ENCODE measurements at regions of chr11 and their contacts with region 1.

Region 1: DNA sequence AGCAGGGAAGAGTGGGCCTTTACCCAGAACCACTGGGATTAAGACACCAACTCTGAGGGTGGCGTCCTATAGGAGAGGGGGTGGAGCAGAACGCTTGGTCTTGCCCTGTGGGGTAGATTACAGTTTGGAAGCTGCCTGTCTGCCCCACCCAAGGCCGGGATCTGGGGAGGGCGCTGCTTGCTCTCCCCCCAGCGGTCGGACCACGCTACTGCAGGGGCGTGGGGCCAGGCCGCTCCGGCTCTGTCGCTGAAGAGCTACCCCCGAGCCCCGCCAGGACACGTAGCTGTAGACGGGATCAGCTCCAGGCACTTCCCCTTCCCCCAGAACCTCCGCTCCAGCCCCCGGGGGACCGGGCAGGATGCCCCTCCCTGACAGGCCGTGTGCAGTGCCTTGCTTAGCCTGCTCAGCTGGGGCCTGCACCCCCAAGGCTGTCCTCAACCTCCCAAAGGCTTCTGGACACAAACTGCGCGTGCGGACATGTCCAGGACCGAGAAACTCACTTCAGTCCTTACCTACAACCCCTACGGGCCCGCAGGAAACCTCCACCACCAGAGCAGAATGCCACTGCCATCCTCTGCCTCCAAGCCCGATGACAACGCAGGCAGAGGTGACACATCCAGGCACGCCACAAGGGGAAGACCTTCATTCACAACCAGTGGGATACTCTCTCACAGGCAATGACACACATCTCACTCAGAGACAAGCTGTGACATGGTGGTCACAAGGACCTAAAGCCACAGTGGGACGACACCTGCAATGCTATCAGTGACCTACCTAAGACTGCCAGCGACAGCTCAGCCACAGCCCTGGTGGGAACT is 3.6 kb downstream of the AHNAK start:
- DNase-seq: peak; percentile 86 to 93 (median 89)
- ATAC-seq: peak; percentile 32 to 61 (median 46)
- H3K4me3 ChIP-seq: peak overlapping the region; percentile 71 to 100 (median 98)
- H3K27ac ChIP-seq: peak overlapping the region; percentile 94 to 100 (median 99)
- H3K4me1 ChIP-seq: peaks cover 42 to 84% (median 69%) of the 10 kb centered on the region in 12 donors
- H3K27me3 ChIP-seq: no peaks in the 10 kb centered on the region
- CTCF ChIP-seq: peak; percentile 97 to 100 (median 99)
- POLR2A ChIP-seq: no peak

Region 2: DNA sequence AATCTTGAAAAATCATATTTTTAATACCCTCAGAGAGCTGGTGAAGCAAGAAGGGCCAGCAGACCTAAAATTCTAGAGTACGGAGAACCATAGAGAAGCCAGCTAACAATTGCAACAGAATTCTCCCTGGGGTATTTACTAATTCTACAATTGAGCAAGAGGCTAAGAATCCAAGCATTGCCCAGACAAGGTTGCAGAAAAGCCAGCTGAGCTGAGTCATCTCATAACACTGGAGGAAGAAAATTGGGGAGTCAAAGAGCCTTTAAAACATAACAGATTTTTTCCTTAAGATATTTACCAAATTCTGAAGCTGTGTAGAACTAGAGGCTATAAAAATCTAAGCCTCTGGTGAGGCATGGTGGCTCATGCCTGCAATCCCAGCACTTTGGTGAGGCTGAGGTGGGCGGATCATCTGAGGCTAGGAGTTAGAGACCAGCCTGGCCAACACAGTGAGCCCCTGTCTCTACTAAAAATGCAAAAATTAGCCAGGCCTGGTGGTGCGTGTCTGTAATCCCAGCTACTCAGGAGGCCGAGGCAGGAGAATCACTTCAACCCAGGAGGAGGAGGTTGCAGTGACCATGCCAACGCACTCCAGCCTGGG is 1164.1 kb before region 1 on chr11:
- intact Hi-C with region 1: no loop called
- DNase-seq: peak in 2 of 5 donors; percentile 43 to 46
- ATAC-seq: peak; percentile 55 to 95 (median 82)
- H3K4me3 ChIP-seq: no peak overlapping the region
- H3K27ac ChIP-seq: peak overlapping the region in 11 of 12 donors; percentile 10 to 51 (median 41)
- H3K4me1 ChIP-seq: peaks cover 0 to 12% (median 0%) of the 10 kb centered on the region in 12 donors
- H3K27me3 ChIP-seq: no peaks in the 10 kb centered on the region
- CTCF ChIP-seq: no peak
- POLR2A ChIP-seq: no peak

Region 3: DNA sequence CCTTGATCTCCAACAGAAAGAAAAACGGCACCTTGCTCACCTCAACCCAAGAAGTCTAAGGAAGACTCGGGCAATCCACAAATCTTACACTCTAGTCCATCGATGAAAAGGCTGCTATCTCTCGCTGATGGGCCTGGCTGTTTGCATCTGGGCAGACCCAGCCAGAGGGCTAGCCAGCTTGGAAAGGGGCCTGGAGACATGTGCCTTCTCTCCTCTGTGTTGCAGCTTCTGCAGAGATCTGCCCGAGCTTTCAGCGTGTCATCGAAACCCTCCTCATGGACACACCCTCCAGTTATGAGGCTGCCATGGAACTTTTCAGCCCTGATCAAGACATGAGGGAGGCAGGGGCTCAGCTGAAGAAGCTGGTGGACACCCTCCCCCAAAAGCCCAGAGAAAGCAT is 121.0 kb before region 1 on chr11:
- intact Hi-C with region 1: loop called (anchors 1 to 5 kb)
- DNase-seq: no peak
- ATAC-seq: no peak
- H3K4me3 ChIP-seq: no peak overlapping the region
- H3K27ac ChIP-seq: peak overlapping the region in 1 of 12 donors; percentile 16
- H3K4me1 ChIP-seq: peaks cover 0 to 18% (median 7%) of the 10 kb centered on the region in 12 donors
- H3K27me3 ChIP-seq: no peaks in the 10 kb centered on the region
- CTCF ChIP-seq: no peak
- POLR2A ChIP-seq: no peak

Region 4: GRCh38 chr11:62484352-62484751 is 58.6 kb before region 1 on chr11:
- intact Hi-C with region 1: no loop called
- DNase-seq: no peak
- ATAC-seq: no peak
- H3K4me3 ChIP-seq: no peak overlapping the region
- H3K27ac ChIP-seq: no peak overlapping the region
- H3K4me1 ChIP-seq: peaks cover 0 to 17% (median 0%) of the 10 kb centered on the region in 12 donors
- H3K27me3 ChIP-seq: no peaks in the 10 kb centered on the region
- CTCF ChIP-seq: no peak
- POLR2A ChIP-seq: no peak

Region 5: GRCh38 chr11:62497132-62497915 is 45.6 kb before region 1 on chr11:
- intact Hi-C with region 1: loop called in 3 of 10 experiments (anchors 1 to 5 kb)
- DNase-seq: peak in 1 of 5 donors; percentile 18
- ATAC-seq: peak in 2 of 4 donors; percentile 26 to 51
- H3K4me3 ChIP-seq: no peak overlapping the region
- H3K27ac ChIP-seq: peak overlapping the region in 1 of 12 donors; percentile 22
- H3K4me1 ChIP-seq: peaks cover 0 to 46% (median 29%) of the 10 kb centered on the region in 12 donors
- H3K27me3 ChIP-seq: no peaks in the 10 kb centered on the region
- CTCF ChIP-seq: peak in 11 of 12 donors; percentile 21 to 52 (median 37)
- POLR2A ChIP-seq: no peak

Region 6: DNA sequence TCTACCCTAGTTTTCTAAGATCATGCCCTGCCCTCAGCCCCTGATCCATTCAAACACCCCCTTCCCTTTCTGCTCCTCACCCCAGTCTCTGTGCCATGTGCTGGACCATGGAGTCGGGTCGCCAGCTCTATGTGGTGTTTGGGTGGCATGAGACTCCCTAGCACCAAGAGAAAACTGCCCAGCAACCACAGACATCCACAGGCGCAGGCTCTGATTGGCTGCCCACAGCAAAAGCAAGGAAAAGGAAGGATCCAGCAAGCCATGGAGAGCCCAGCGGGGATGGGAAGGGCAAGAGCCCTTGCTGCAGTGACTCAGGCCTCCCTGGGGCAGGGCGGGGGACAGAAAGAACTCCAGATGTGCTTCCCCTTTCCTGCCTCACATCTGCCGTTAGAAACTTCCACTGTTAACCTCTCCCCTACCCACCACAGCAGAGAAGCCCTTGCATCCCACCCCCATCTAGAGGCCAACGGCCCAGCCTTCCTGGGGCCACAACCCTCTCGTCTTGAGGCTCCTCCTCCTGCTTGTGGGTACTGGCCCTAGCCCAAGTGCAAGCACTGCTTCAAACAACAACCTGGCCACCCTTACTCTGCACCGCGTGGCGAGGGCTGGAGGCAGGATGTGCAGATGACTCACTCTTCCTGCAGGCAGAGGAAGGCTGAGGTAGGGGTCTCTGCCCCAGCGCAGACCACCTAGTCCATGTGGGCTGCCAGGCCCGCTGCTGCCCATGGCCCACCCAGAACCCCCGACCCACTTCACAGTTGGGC is 13.3 kb after region 1 on chr11:
- intact Hi-C with region 1: loop called in 2 of 10 experiments (anchors 2 kb)
- DNase-seq: peak; percentile 85 to 94 (median 90)
- ATAC-seq: peak; percentile 46 to 81 (median 71)
- H3K4me3 ChIP-seq: peak overlapping the region in 8 of 12 donors; percentile 2 to 40 (median 19)
- H3K27ac ChIP-seq: peak overlapping the region; percentile 65 to 98 (median 92)
- H3K4me1 ChIP-seq: peaks cover 18 to 96% (median 77%) of the 10 kb centered on the region in 12 donors
- H3K27me3 ChIP-seq: no peaks in the 10 kb centered on the region
- CTCF ChIP-seq: no peak
- POLR2A ChIP-seq: no peak

Region 7: DNA sequence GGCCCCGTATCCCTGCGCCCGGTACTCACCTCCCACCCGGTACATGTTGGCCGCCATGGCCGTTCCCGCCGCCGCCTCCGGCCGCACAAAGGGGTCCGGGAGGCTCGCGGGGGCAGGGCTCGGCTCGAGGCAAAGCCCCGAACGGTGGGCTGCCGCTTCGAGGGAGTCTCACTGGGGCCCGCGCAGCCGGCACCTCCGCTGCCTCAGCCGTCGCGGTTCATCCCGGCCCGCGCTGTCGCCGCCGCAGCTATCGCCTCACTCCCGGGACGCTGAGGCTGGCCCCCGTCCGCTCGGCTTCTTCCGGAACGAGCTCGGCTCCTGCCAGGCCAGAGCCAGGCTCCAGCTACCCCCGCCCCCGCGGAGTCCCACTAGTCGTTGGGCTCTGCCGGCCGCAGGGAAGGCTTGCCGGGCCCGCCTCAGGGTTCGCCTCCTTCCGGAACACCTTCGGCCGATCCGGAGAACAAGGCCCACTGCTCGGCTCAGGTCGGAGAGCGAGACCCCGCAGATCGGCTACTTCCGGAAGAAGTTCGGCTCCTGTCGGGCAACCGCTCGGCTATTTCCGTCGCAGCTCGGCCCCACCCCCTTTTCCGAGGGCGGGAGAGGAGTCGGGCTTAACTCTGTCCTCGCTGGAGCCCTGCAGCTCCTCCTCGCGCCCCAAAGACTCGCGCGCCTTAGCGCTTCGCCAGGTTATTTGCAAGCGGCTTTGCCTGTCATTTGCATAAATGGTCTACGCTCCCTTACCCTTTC is 58.6 kb after region 1 on chr11 and contains the start of gene MTA2:
- intact Hi-C with region 1: loop called in 1 of 10 experiments (anchors 2 kb)
- DNase-seq: peak; percentile 97 to 98 (median 98)
- ATAC-seq: peak; percentile 87 to 91 (median 90)
- H3K4me3 ChIP-seq: peak within 1 kb of the TSS; percentile 81 to 100 (median 90)
- H3K27ac ChIP-seq: peak within 1 kb of the TSS; percentile 91 to 100 (median 98)
- H3K4me1 ChIP-seq: peaks cover 4 to 41% (median 32%) of the 10 kb centered on the region in 12 donors
- H3K27me3 ChIP-seq: no peaks in the 10 kb centered on the region
- CTCF ChIP-seq: no peak
- POLR2A ChIP-seq: peak in 1 of 2 donors; percentile 60
- total RNA-seq, gene MTA2: 24.1 to 55.3 (median 33.7) TPM

Region 8: GRCh38 chr11:62627714-62628113 is 84.8 kb after region 1 on chr11:
- intact Hi-C with region 1: no loop called
- DNase-seq: peak in 1 of 5 donors; percentile 25
- ATAC-seq: no peak
- H3K4me3 ChIP-seq: no peak overlapping the region
- H3K27ac ChIP-seq: no peak overlapping the region
- H3K4me1 ChIP-seq: peaks cover 0 to 4% (median 0%) of the 10 kb centered on the region in 12 donors
- H3K27me3 ChIP-seq: no peaks in the 10 kb centered on the region
- CTCF ChIP-seq: no peak
- POLR2A ChIP-seq: no peak